Activated naive CD8-positive, alpha-beta T cell treated with anti-CD3 and anti-CD28 coated beads, Interleukin-2, amount 10 ng/mL, durations not matched to agents 7 days and 5 days (primary cell): ENCODE measurements at regions of chr17 and their contacts with region 1.

Region 1: DNA sequence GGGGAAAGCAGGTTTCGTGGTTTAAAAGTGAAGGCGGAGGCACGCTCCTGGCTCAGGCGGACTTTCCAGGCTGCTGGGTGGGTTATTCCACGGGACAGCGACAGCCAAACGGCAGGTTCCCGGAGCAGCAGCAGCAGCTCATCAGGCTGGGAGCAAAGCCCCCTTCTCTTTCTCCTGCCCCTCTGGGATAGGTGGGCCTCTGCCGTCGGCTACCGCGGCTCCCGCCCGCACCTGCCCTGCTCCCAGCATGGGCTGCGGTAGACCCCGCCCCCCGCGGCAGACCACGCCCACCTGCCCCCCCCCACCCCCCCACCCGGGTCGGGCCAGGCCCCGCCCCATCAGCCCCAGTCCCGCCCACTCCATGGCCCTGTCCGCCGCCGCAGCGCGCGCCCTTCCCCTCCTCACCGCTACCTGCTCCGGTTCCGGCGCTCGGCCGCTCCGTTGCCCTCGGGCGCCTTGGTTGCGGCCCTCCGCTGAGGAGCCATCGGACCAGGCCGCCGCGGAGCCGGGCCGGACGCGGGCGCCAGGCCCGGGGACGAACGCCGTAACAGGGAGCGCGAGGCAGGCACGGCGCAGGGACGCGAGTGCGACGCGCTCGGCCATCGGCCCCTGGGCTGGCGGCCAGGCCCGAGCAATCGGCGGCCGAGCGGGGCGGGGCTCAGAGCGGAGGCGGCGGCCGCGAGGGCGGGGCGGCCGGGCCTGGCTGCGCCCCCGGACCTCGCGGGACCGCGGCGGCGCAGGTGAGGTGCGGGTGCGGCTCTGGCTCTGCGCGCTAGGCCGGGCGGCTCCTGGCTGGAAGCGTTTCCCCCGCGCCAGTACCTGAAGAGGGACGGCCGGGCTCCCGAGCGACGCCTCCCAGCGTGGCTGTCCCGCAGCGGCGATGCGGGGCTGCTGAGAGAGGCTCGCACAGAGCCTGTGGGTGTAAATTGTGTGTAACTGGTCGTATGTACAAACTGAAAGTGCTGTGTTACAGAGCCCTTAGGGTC is at the starts of genes HEXD and OGFOD3:
- DNase-seq: peak; percentile 96
- ATAC-seq: peak; percentile 83
- H3K4me3 Mint-ChIP-seq: peak within 1 kb of the TSS; percentile 86
- H3K27ac Mint-ChIP-seq: peak within 1 kb of the TSS; percentile 91
- H3K4me1 Mint-ChIP-seq: peaks cover 17% of the 10 kb centered on the region
- H3K27me3 Mint-ChIP-seq: no peaks in the 10 kb centered on the region
- total RNA-seq, gene HEXD: 84.1 to 84.8 TPM
- total RNA-seq, gene OGFOD3: 24.4 to 27.4 TPM

Region 2: GRCh38 chr17:82428546-82428945 is 10.3 kb after region 1 on chr17:
- POLR2A ChIA-PET with region 1: interaction called, 10 read pairs
- DNase-seq: no peak
- ATAC-seq: no peak
- H3K4me3 Mint-ChIP-seq: no peak overlapping the region
- H3K27ac Mint-ChIP-seq: peak overlapping the region; percentile 56
- H3K4me1 Mint-ChIP-seq: peaks cover 19% of the 10 kb centered on the region
- H3K27me3 Mint-ChIP-seq: no peaks in the 10 kb centered on the region

Region 3: DNA sequence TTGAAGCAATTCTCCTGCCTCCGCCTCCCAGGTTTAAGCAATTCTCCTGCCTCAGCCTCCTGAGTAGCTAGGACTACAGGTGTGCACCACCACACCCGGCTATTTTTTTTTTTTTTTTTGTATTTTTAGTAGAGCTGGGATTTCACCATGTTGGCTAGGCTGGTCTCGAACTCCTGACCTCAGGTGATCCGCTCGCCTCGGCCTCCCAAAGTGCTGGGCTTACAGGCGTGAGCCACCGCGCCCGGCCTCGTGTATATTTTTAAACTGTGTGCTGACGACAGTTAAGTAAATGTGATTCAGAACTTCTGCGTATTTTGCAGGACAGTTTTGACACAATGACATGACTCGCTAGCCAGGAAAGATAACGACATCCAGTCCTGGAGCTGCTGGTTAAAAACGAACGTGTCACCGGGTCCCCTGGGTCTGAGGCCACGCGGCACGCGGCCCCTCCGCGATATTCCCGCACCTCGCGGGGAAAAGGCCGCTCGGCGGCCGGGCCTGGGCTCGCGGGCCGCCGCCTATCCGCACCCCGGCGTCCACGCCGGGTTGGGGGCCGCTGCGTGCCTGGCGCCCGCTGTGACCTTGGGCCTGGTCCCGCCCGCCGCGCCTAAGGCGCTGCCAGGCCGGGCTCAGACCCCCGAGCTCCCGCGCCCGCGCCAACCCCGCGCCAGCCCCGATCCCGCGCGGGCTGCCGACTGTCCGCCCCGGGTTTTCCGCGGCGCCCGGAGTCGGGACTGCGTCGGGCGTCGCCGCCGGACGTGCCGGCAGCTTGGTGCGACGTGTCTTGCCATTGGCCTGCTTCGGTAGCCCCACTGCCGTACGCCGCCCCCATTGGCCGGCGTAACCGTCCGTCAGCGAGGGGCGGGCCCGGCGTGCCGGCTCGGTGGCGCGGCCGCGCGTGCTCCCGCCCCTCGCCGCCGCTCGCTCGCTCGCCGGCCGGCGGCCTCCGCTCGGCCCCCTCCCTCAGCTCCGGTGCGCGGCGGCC is 100.8 kb after region 1 on chr17 and contains the start of gene FOXK2:
- POLR2A ChIA-PET with region 1: no interaction called
- DNase-seq: peak; percentile 100
- ATAC-seq: peak; percentile 98
- H3K4me3 Mint-ChIP-seq: peak within 1 kb of the TSS; percentile 86
- H3K27ac Mint-ChIP-seq: peak within 1 kb of the TSS; percentile 84
- H3K4me1 Mint-ChIP-seq: peaks cover 15% of the 10 kb centered on the region
- H3K27me3 Mint-ChIP-seq: no peaks in the 10 kb centered on the region
- total RNA-seq, gene FOXK2: 59.6 to 60.8 TPM